Psoas muscle (tissue), 8 donors: ENCODE measurements at regions of chr14 and their contacts with region 1.

Region 1: DNA sequence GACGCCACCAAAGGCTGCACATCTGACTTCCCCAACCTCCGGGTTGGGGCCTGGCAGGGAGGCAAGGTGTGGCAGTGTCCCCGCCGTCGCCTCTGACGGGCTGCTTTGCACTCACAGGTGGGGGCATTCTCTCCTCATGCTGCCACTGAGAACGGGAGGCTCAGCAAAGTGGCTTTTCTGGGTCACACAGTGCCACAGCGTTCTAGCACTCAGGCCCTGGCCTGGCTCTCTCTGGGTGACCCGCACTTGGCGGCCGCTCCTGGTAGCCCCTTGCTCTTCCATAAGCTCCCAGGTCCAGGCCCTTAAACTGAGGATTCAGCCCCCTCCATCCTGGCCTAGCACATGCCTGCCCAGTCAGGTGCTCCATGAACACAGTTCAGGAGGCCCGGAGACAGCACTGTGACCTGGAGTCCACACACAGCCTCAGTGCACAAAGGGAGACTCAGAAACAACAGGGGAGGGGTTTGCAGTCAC is 25.2 kb downstream of the SERPINA1 start:
- DNase-seq: no peak
- ATAC-seq: no peak
- H3K4me3 ChIP-seq: no peak overlapping the region
- H3K27ac ChIP-seq: no peak overlapping the region
- H3K4me1 ChIP-seq: no peaks in the 10 kb centered on the region
- H3K27me3 ChIP-seq: no peaks in the 10 kb centered on the region
- CTCF ChIP-seq: no peak

Region 2: DNA sequence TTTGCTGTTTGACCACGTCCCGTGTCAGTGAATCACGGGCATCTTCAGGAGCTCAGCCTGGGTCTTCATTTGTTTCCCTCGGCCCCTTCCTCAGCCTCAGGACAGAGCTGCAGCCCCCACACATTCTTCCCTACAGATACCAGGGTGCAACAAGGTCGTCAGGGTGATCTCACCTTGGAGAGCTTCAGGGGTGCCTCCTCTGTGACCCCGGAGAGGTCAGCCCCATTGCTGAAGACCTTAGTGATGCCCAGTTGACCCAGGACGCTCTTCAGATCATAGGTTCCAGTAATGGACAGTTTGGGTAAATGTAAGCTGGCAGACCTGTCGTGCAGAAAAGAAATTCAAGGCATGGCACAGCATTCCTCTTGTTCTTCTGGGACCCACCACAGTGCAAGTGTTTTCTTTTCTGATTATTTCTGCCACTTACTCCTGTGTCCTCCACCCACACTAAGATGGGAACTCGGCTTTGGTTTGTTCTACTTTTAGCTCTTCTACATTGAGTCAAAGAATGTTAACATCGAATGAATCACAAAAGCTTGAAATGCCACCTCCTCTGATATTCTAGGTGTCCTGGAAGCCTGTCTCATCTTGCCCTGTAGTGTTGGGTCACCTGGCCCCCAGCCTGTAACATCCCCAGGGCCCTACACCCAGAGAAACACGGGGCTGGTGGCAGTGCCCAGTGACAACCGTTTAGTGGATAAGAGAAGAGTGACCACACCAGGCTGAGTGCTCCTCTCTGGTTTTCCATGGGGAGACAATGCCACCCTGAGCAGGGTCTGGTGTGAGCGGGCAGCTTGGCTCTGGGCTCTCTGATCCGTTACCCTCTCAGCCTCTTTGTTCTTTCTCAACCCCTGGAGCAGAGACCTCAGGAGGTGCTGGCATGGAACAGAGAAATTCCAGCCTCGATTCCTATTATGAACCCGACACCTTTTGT is 16.4 kb after region 1 on chr14:
- intact Hi-C with region 1: loop called (anchors 2 kb)
- DNase-seq: no peak
- ATAC-seq: no peak
- H3K4me3 ChIP-seq: no peak overlapping the region
- H3K27ac ChIP-seq: no peak overlapping the region
- H3K4me1 ChIP-seq: no peaks in the 10 kb centered on the region
- H3K27me3 ChIP-seq: no peaks in the 10 kb centered on the region
- CTCF ChIP-seq: no peak